Dendritic cell treated with granulocyte-macrophage colony-stimulating factor and Interleukin-4, amounts not matched to agents 40 ng/mL and 50 ng/mL, for 4 days (primary cell): ENCODE measurements at regions of chr16 and their contacts with region 1.

Region 1: DNA sequence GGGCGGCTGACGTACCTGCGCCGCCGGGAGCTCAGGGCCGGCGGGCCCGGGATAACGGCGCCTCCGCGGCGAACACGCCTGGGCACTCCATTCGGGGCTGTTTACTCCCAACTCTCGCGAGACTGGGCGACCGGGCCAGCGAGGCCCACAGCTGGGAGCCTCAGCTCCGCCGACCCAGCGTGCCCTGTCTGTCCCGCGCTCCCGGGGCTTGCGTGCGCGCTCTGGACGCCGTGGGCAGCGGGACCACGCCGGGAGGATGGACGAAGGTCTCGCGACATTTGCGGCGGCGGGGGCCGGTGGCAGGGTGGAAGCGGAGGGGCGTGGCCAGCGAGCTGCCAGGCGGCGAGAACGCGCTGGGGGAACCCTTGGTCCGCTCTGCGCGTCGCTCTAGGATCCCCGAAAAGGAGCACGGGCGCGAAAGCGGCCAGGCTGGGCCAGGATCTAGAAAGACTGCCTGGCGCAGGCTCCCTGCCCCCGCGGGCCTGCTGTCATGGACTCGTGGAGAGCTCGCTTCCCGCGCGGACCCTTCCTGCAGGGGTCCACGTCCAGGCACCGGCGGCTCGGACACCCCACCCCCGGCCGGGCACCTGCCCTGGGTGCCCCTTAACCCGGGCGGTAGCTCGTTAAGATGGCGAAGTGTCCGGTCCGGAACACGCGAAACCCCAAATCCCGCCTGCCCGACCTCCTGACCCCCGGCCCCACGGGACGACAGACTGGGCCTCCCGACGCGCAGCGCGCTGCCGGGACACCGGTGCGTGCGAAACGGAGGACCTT is at the start of gene MBTPS1:
- H3K4me3 Mint-ChIP-seq: peak within 1 kb of the TSS; percentile 83
- H3K27ac Mint-ChIP-seq: peak within 1 kb of the TSS; percentile 85
- H3K4me1 Mint-ChIP-seq: peaks cover 29% of the 10 kb centered on the region
- H3K27me3 Mint-ChIP-seq: peaks cover 2% of the 10 kb centered on the region

Region 2: DNA sequence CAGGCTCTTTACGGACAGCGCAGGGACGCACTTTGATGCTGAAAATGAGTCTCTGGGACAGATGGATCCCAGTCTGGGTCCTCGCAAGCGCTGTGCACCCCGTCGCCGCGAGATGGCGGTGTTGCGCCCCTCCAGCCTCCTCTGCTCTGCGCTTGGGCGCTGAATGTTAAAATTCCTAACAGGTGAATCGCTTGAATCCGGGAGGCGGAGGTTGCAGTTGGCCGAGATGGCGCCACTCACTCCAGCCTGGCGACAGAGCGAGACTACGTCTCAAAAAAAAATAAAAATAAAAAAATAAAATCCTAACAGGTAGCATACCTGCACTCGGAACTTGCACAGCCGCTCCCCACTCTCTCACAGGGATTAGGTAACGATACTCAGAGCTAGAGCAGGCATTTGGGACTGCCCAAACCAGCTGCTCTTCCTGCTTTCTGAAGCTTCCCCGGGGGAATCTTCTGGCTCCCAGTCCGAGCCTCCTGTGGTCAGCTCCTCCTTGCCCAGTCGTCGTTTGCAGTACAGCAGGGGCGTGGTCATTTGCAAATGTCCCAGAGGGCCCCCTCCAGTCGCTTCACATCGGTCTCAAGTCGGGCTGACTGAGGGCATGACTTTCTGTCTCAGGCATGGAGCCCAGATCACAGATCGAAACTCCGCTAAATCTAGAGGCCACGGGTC is 190.0 kb before region 1 on chr16:
- intact Hi-C with region 1: no loop called
- H3K4me3 Mint-ChIP-seq: no peak overlapping the region
- H3K27ac Mint-ChIP-seq: no peak overlapping the region
- H3K4me1 Mint-ChIP-seq: no peaks in the 10 kb centered on the region
- H3K27me3 Mint-ChIP-seq: no peaks in the 10 kb centered on the region

Region 3: GRCh38 chr16:84069540-84069939 is 47.4 kb before region 1 on chr16:
- intact Hi-C with region 1: loop called (anchors 2 kb)
- H3K4me3 Mint-ChIP-seq: peak overlapping the region; percentile 63
- H3K27ac Mint-ChIP-seq: peak overlapping the region; percentile 90
- H3K4me1 Mint-ChIP-seq: peaks cover 46% of the 10 kb centered on the region
- H3K27me3 Mint-ChIP-seq: no peaks in the 10 kb centered on the region

Region 4: GRCh38 chr16:84088695-84089395 is 28.1 kb before region 1 on chr16:
- intact Hi-C with region 1: no loop called
- H3K4me3 Mint-ChIP-seq: no peak overlapping the region
- H3K27ac Mint-ChIP-seq: peak overlapping the region; percentile 12
- H3K4me1 Mint-ChIP-seq: peaks cover 53% of the 10 kb centered on the region
- H3K27me3 Mint-ChIP-seq: no peaks in the 10 kb centered on the region

Region 5: DNA sequence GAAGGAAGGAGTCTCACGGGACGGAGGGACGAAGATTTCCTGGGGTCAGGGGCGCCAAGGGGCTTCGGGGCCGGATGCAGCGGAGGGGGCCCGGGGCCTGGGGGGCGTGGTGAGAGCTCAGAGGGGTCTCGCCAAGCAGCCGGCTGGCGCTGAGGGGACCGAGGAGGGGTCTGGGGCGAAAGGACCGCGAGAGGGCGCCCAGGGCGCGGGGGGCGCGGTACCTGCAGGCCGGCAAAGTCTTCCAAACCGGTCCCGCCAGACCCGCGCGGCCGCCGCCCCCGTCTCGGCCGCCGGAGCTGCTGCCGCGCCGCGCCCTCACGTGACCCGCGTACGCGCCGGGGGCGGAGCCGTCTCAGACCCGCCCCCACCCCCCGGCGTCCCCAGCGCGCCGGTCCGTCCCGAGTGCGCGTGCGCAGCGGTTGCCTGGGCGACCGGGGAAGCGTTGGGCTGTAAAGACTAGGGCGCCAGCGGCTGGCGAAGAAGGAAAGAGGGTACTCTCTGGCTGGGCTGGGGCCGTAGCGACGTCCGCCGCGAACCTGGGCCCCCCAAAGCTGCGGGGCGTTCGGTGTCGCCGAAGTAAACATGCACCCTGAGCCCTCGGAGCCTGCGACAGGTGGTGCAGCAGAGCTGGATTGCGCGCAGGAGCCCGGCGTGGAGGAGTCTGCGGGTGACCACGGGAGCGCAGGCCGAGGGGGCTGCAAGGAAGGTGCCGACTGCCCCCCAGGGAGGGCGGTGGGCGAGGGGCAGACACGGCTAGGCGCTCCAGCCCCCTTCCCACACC is 28.1 kb after region 1 on chr16 and contains the starts of genes DNAAF1 and HSDL1:
- intact Hi-C with region 1: loop called (anchors 2 kb)
- H3K4me3 Mint-ChIP-seq: peak within 1 kb of the TSS; percentile 88
- H3K27ac Mint-ChIP-seq: peak within 1 kb of the TSS; percentile 84
- H3K4me1 Mint-ChIP-seq: peaks cover 6% of the 10 kb centered on the region
- H3K27me3 Mint-ChIP-seq: peaks cover 24% of the 10 kb centered on the region

Region 6: GRCh38 chr16:84156342-84156784 is 39.5 kb after region 1 on chr16:
- intact Hi-C with region 1: no loop called
- H3K4me3 Mint-ChIP-seq: no peak overlapping the region
- H3K27ac Mint-ChIP-seq: no peak overlapping the region
- H3K4me1 Mint-ChIP-seq: no peaks in the 10 kb centered on the region
- H3K27me3 Mint-ChIP-seq: peaks cover 48% of the 10 kb centered on the region

Region 7: DNA sequence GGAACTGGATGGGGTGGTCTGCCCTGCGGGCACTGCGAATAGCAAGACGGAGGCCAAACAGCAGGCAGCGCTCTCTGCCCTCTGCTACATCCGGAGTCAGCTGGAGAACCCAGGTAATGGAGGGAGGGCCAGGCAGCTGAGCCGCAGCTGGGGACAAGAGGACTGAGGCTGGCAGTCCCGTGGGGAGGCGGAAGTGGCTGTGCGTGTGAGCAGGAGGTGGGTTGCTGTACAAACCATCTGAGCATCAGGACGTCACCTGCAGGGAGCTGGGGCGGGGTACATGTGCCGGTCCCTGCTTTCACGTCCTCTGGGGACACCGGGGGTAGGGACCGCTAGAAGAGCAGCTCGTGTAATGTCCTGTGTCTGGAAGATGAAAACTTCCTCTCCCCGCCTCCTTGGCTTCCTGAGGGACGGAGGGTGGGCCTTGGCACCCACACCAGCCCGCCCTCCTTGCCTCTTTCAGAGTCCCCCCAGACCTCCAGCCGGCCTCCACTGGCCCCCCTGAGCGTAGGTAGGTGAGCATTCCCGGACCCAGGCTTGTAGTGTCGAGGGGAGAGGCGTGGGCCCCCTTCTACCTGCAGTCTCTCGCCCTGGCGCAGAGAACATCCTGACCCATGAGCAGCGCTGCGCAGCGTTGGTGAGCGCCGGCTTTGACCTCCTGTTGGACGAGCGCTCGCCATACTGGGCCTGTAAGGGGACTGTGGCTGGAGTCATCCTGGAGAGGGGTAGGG is 77.7 kb after region 1 on chr16:
- intact Hi-C with region 1: no loop called
- H3K4me3 Mint-ChIP-seq: peak overlapping the region; percentile 21
- H3K27ac Mint-ChIP-seq: no peak overlapping the region
- H3K4me1 Mint-ChIP-seq: peaks cover 13% of the 10 kb centered on the region
- H3K27me3 Mint-ChIP-seq: peaks cover 15% of the 10 kb centered on the region